OCI-LY7 (cell line): ENCODE measurements at regions of chr2 and their contacts with region 1.

Region 1: GRCh38 chr2:100242891-100243619 is 79.2 kb downstream of the LONRF2 start:
- DNase-seq: peak; percentile 83
- H3K4me3 ChIP-seq: no peak overlapping the region
- H3K27ac ChIP-seq: no peak overlapping the region
- H3K4me1 ChIP-seq: peaks cover 56% of the 10 kb centered on the region
- CTCF ChIP-seq: peak; percentile 97

Region 2: DNA sequence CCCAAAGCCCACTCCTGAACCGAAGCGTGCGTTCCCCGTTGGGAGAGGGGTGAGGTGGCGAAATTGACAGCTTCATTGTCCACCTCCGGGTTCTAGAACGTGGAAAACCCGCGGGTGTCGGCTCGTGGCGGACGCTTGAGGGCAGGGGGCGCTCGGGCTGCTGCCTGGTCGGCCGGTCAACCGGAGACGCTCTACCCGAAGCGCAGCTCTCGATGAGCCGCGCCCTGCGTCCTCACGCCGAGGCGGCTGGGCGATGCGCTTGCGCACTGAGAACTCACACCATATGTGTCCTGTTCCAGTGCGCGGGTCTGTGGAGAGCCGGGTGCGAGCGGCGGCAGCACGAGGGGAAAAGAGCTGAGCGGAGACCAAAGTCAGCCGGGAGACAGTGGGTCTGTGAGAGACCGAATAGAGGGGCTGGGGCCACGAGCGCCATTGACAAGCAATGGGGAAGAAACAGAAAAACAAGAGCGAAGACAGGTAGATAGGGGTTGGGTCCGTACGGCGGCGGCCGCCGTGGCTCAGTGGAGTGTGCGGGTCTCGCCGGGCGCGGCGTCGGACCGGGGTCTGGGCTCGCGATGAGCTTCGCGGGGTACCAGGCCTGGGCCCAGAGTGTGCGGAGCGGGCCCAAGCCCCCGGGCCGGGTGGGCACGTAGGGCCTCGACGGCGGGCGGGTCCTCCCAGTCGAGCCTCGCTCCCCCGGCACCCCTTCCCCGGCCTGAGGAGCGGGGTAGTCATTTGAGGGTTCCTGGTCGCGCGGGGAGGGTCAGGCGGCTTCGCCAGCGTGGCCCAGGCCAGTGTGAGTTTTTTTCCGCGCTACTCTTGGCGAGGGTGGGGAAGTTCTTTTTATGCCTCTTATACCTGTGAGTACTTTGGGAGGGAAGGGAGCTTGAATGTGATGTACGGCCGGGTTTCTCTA is 905.7 kb before region 1 on chr2 and contains the start of gene EIF5B:
- CTCF ChIA-PET with region 1: no interaction called
- POLR2A ChIA-PET with region 1: no interaction called
- intact Hi-C with region 1: loop called (anchors 2 kb)
- DNase-seq: peak; percentile 98
- H3K4me3 ChIP-seq: peak within 1 kb of the TSS; percentile 86
- H3K27ac ChIP-seq: peak within 1 kb of the TSS; percentile 83
- H3K4me1 ChIP-seq: peaks cover 33% of the 10 kb centered on the region
- CTCF ChIP-seq: peak; percentile 87
- total RNA-seq, gene EIF5B: 19.9 and 28.7 TPM in 2 replicates

Region 3: DNA sequence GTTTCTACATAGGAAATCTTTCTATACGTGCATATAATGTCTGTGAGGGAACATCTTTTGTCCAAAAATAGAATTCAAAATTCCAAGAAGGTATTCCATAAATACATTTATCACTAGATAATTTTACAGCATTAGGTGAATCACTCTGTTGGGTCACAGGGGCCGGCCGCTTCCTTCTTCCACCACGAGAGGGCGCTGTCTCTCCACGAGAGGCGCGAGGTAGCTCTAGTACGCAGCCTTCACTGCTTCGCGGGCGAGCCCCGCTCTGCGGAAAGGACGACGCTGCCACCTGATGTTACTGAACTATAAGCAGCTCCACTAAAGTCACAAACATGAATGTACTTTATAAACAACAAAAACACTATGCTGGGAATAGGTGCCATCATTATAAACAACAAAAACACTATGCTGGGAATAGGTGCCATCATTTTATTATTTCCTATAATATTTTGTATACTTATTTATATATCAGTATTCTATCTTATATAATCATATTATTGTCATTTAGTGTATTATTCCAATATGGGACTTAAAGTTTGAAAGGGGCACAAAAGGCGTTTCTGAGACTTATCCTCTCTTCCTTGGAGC is 683.9 kb before region 1 on chr2:
- CTCF ChIA-PET with region 1: no interaction called
- POLR2A ChIA-PET with region 1: no interaction called
- intact Hi-C with region 1: loop called (anchors 1 kb)
- DNase-seq: peak; percentile 83
- H3K4me3 ChIP-seq: no peak overlapping the region
- H3K27ac ChIP-seq: no peak overlapping the region
- H3K4me1 ChIP-seq: no peaks in the 10 kb centered on the region
- CTCF ChIP-seq: peak; percentile 100

Region 4: GRCh38 chr2:99725820-99726219 is 517.2 kb before region 1 on chr2:
- CTCF ChIA-PET with region 1: no interaction called
- POLR2A ChIA-PET with region 1: no interaction called
- intact Hi-C with region 1: loop called (anchors 10 kb)
- DNase-seq: no peak
- H3K4me3 ChIP-seq: no peak overlapping the region
- H3K27ac ChIP-seq: no peak overlapping the region
- H3K4me1 ChIP-seq: no peaks in the 10 kb centered on the region
- CTCF ChIP-seq: peak; percentile 65

Region 5: DNA sequence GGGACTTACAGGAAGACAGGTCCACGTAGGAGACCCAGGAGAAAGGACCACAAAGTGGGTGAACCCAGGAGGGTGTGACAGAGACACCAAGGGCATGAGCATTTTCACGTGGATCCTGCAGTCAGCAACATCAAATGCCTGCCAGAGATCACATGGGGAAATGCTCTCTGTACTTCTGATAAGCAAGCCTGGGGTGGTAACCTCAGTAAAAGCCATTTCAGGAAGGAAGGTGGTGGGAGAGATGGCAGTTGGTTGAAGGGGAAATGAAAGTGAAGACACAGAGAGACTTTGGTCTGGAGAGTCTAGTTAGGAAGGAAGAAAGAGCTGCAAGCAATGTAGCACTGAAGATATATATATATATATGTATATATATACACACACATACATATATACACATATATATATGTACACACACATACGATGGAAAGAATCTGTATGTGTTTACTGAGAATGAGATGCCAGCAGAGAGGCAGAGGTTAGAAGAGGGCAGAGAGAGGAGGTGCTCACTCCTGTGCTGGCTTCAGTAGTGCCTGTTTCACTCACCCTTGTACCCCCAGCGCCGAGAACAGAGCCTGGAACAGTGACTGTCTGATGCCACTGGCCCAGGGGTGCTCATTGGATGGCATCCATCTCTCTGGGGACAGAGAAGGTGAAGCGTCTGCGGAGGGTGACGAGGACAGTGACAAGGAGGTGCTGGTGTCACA is 415.6 kb before region 1 on chr2:
- CTCF ChIA-PET with region 1: no interaction called
- POLR2A ChIA-PET with region 1: no interaction called
- intact Hi-C with region 1: loop called (anchors 2 kb)
- DNase-seq: peak; percentile 83
- H3K4me3 ChIP-seq: peak overlapping the region; percentile 44
- H3K27ac ChIP-seq: peak overlapping the region; percentile 87
- H3K4me1 ChIP-seq: peaks cover 29% of the 10 kb centered on the region
- CTCF ChIP-seq: no peak

Region 6: GRCh38 chr2:100113990-100114433 is 129.0 kb before region 1 on chr2:
- CTCF ChIA-PET with region 1: interaction called, 4 read pairs
- POLR2A ChIA-PET with region 1: interaction called, 3 read pairs
- intact Hi-C with region 1: loop called (anchors 5 kb)
- DNase-seq: peak; percentile 87
- H3K4me3 ChIP-seq: no peak overlapping the region
- H3K27ac ChIP-seq: peak overlapping the region; percentile 81
- H3K4me1 ChIP-seq: peaks cover 64% of the 10 kb centered on the region
- CTCF ChIP-seq: no peak

Region 7: DNA sequence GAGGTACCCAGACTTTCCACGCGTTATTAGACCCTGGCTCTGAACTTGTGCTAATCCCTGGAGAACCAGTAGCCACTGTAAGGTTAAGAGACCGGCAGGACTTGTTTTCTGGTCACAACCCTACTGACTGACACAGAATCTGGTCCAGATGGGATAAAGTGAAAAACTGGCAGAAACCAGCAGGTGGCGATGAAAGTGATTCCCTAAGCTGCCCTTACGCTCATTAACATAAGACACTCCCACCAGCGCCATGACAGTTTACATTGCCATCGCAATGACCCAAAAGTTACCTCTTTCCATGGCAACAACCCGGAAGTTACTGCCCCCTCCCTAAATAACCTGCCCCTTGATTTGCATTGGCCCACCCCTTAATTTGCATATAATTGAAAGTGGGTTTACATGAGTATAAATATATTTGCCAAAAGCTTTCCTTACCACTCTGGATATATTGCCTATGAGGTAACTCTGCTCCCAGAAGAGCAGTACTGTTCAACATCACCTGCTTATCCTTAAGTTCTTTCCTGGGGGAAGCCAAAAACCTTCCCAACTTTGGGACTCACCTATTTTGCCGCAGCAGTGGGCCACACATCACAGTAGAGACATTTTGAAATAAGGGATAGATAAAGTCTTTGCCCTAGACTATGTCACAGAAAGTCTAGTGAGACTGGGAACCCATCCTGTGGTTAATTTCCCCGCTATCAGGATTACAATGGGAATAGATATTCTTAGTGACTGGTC is 64.8 kb before region 1 on chr2:
- CTCF ChIA-PET with region 1: no interaction called
- POLR2A ChIA-PET with region 1: interaction called, 3 read pairs
- intact Hi-C with region 1: loop called (anchors 2 kb)
- DNase-seq: peak; percentile 90
- H3K4me3 ChIP-seq: peak overlapping the region; percentile 22
- H3K27ac ChIP-seq: no peak overlapping the region
- H3K4me1 ChIP-seq: peaks cover 11% of the 10 kb centered on the region
- CTCF ChIP-seq: peak; percentile 84

Region 8: DNA sequence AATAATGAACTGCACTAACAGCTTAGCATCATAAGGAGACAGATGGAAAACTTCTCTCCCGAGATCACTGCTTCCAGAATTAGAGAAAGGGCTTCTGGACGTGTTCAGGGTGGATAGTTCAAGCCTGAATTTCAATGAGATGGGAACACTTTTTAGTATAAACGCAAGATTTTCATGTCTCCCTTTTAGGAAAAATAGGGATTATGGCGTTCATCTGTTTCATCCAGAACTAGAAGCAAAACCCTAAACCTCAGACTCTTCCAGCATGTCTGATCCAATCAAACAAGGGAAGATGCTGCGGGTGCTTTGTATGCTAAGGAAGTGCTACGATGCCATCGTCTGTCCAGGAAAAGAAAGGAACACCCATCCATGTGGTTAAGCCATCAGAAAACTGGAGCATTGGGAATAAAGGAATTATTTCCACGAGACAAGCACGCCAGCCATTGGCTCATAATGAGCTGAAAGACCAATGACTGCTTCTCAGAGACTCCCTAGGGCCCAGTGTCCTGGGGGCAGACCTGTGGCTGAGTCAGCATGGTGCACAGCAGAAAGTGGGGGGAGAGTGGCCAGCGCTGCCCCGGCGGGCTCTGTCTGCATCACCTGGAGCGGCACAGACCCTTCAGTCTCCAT is 34.8 kb before region 1 on chr2:
- CTCF ChIA-PET with region 1: no interaction called
- POLR2A ChIA-PET with region 1: no interaction called
- intact Hi-C with region 1: no loop called
- DNase-seq: no peak
- H3K4me3 ChIP-seq: no peak overlapping the region
- H3K27ac ChIP-seq: no peak overlapping the region
- H3K4me1 ChIP-seq: no peaks in the 10 kb centered on the region
- CTCF ChIP-seq: no peak

Region 9: DNA sequence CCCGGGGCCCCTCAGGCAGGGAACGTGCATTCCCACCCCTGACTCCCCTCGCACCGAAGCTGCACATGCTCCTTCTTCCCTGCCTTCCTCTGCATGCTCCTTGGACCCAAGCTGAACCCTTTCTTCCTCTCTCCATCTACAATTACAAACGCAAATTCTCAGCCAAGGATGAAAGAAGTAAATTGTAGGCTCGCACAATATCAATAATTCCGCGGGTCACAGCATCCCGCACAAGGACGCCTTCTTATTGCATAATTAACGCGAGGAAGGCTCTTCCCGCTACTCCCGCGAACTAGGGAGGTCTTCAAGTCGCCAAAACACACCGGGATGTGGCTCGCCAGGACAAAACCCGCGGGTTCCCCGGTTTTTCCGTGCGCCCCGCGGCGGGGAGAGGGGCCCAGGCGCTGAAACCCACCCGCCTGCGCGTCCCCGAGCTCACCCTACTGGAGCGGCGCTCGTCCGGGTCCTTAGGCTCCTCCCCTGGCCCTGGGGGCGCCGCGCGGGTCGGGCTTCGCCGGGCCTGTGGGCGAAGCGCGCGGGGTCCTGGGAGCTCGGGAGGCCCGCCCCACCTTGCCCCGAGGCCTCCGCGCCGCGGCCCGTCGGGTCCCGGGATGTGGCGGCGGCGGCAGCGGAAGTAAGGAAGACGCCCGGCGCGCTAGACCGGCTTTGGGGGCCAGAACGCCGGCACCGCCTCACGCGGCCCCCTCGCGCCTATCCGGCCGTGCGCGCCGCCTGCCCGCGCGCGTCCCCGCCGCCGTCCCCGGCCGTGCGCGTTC is 174.1 kb after region 1 on chr2 and contains the start of gene CHST10:
- CTCF ChIA-PET with region 1: no interaction called
- POLR2A ChIA-PET with region 1: no interaction called
- intact Hi-C with region 1: no loop called
- DNase-seq: peak; percentile 78
- H3K4me3 ChIP-seq: peak within 1 kb of the TSS; percentile 93
- H3K27ac ChIP-seq: peak within 1 kb of the TSS; percentile 18
- H3K4me1 ChIP-seq: peaks cover 14% of the 10 kb centered on the region
- CTCF ChIP-seq: no peak
- total RNA-seq, gene CHST10: 12.8 and 19.1 TPM in 2 replicates